Calu3 (cell line): ENCODE measurements at regions of chr9 and their contacts with region 1.

Region 1: GRCh38 chr9:32703635-32704034 is 68.2 kb upstream of the TAF1L start:
- DNase-seq: no peak
- H3K4me3 Mint-ChIP-seq: no peak overlapping the region
- H3K27ac Mint-ChIP-seq: no peak overlapping the region
- H3K4me1 Mint-ChIP-seq: peaks cover 20% of the 10 kb centered on the region
- H3K27me3 Mint-ChIP-seq: peaks cover 10% of the 10 kb centered on the region
- CTCF ChIP-seq: no peak

Region 2: DNA sequence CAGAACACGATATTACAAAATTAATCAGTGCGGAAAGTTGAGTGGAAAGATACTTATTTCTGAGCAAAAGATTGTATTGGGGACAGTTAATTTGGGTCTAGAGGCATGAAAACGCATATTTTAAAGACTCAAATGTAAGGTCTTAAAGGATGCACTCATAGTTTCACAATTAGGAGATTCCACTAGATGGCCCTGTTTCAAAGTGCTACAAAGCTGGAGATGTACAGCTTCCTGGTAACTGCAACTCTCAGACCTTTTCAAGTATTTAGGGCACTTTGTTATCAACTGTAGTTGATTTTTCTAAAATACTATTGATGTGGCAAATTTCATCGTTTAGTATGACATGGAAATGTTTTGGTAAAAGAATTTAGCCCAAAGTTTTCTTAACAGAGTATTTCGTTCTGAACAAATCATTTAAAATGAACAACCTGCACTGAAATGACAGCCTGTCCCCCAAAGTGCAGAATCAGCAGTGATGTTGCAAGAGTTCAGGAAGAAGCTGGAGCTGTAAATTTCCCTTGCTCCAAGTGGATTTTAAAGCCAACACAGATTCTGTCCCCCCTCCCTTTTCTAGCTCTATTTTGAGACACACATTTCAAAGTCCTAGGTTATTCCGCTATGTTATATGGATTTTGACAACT is 114.4 kb before region 1 on chr9:
- CTCF ChIA-PET with region 1: interaction called, 5 read pairs
- intact Hi-C with region 1: loop called (anchors 1 kb)
- DNase-seq: no peak
- H3K4me3 Mint-ChIP-seq: no peak overlapping the region
- H3K27ac Mint-ChIP-seq: no peak overlapping the region
- H3K4me1 Mint-ChIP-seq: peaks cover 18% of the 10 kb centered on the region
- H3K27me3 Mint-ChIP-seq: no peaks in the 10 kb centered on the region
- CTCF ChIP-seq: no peak